PC-3 (cell line): ENCODE measurements at regions of chr19 and their contacts with region 1.

Region 1: GRCh38 chr19:20259615-20260014 is 92.6 kb downstream of the ZNF486 start:
- DNase-seq: no peak
- ATAC-seq: no peak
- H3K4me3 ChIP-seq: no peak overlapping the region
- H3K27ac ChIP-seq: no peak overlapping the region
- H3K4me1 ChIP-seq: no peaks in the 10 kb centered on the region
- H3K27me3 ChIP-seq: no peaks in the 10 kb centered on the region
- CTCF ChIP-seq: no peak

Region 2: DNA sequence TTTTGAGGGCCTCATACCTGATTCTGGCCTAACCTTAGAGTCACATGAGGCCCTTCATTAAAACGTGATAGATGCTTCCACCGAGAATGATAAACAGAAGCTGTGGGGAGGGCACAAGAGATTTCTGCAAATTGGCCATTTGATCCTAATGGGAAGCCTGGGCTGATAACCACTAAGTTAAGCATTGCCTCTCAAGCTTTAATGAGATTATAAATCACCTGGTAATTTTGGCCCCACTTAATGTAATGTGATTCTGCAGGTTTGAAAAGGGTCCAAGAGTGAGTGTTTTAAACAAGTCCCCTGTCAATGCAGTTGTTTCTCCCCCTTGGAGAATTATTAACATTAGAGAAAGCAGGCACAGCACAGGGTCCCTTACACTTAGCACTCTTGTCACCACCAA is 50.6 kb before region 1 on chr19:
- CTCF ChIA-PET with region 1: interaction called, 10 read pairs
- POLR2A ChIA-PET with region 1: no interaction called
- intact Hi-C with region 1: no loop called
- DNase-seq: no peak
- ATAC-seq: no peak
- H3K4me3 ChIP-seq: no peak overlapping the region
- H3K27ac ChIP-seq: no peak overlapping the region
- H3K4me1 ChIP-seq: no peaks in the 10 kb centered on the region
- H3K27me3 ChIP-seq: no peaks in the 10 kb centered on the region
- CTCF ChIP-seq: no peak